Activated T-helper 2 cell treated with anti-CD3 and anti-CD28 coated beads, Interferon-gamma antibody, Interleukin-2, Interleukin-4, amounts not matched to agents 10 μg/mL and 5 μg/mL and 100 μg/mL, durations not matched to agents 14 hours and 24 hours and 36 hours (primary cell): ENCODE measurements at regions of chr12 and their contacts with region 1.

Region 1: DNA sequence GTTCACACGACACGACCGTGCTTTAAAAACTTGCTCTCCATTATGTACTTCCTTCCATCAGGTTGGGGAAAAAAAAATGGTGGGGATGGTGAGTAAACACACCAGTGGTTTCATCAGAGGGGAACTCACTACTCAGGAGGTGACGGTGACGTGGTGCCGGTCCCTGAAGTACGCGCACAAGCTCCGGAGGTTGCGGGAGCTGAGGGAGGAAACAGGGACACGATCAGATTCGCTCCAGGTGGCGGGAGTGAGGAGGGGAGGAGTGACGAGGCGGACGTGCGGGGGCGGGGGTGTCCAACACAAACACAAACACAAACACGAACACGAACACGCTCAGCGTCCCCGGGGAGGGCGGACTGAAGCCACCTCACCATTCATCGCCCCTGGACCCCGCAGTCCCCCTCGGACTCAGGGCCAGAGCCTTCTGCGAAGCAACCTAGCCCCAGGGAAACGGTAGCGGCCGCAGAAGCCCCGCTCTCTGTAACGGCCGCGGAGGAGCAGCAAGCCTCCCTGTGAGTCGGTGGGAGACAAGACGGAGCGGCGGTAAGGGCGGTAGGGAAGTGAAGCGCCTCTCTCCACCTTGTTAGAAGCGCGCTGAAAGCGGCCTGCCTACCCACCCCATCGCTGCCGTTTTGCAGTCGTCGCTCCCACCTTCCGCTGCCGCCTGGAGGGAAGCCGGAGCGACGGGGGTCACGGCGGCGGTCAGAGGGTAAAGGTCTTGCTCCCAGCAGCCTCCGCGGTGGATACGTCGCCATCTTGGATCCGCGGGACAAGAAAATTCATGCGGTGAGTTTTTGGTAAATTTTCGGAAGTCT is at the start of gene CNOT2:
- DNase-seq: peak; percentile 85
- H3K4me3 Mint-ChIP-seq: peak within 1 kb of the TSS; percentile 97
- H3K27ac Mint-ChIP-seq: peak within 1 kb of the TSS; percentile 99
- H3K4me1 Mint-ChIP-seq: peaks cover 45% of the 10 kb centered on the region
- H3K27me3 Mint-ChIP-seq: no peaks in the 10 kb centered on the region
- total RNA-seq, gene CNOT2: 67.1 and 69.1 TPM in 2 replicates

Region 2: GRCh38 chr12:69738351-69739286 is 504.3 kb before region 1 on chr12 and contains the start of gene RAB3IP:
- intact Hi-C with region 1: loop called (anchors 2 kb)
- DNase-seq: peak; percentile 87
- H3K4me3 Mint-ChIP-seq: peak within 1 kb of the TSS; percentile 81
- H3K27ac Mint-ChIP-seq: peak within 1 kb of the TSS; percentile 70
- H3K4me1 Mint-ChIP-seq: peaks cover 13% of the 10 kb centered on the region
- H3K27me3 Mint-ChIP-seq: peaks cover 33% of the 10 kb centered on the region
- total RNA-seq, gene RAB3IP: 29.8 and 37.7 TPM in 2 replicates

Region 3: DNA sequence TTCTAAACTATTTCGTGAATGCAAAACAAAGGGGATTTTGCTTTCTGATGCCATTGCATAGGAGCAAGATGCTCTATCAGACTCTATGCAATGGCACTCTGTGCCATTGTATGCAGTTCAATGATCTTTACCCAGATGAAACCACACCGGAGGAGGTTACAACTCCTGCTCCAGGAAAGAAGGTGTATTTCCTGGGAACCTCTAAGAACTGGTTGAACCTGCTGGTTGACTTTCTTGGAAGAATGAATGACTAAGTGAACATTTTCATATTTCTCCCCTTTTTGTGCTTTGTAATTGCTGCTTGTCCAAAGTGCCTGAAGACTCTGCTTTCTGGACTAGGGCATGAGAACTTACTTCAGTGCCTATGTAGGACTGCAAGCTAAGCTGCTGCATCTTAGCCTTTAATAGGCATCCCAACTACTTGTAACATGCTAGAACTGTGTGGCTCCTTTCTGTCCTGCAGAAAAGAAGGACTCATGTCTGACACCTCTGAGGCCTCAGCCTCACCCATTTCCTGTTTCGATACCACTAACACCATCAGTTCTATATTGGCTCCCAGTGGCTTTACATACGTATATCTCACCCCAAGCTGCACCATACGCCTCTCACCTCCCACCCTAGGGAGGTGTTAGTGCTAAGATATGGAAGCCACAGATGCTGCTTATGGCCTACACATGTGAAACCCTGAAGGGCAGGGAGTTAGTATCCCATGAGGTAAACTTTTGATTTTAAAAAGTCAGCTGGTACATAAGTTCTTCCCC is 193.1 kb before region 1 on chr12:
- intact Hi-C with region 1: loop called (anchors 5 kb)
- DNase-seq: no peak
- H3K4me3 Mint-ChIP-seq: no peak overlapping the region
- H3K27ac Mint-ChIP-seq: no peak overlapping the region
- H3K4me1 Mint-ChIP-seq: peaks cover 9% of the 10 kb centered on the region
- H3K27me3 Mint-ChIP-seq: peaks cover 2% of the 10 kb centered on the region

Region 4: DNA sequence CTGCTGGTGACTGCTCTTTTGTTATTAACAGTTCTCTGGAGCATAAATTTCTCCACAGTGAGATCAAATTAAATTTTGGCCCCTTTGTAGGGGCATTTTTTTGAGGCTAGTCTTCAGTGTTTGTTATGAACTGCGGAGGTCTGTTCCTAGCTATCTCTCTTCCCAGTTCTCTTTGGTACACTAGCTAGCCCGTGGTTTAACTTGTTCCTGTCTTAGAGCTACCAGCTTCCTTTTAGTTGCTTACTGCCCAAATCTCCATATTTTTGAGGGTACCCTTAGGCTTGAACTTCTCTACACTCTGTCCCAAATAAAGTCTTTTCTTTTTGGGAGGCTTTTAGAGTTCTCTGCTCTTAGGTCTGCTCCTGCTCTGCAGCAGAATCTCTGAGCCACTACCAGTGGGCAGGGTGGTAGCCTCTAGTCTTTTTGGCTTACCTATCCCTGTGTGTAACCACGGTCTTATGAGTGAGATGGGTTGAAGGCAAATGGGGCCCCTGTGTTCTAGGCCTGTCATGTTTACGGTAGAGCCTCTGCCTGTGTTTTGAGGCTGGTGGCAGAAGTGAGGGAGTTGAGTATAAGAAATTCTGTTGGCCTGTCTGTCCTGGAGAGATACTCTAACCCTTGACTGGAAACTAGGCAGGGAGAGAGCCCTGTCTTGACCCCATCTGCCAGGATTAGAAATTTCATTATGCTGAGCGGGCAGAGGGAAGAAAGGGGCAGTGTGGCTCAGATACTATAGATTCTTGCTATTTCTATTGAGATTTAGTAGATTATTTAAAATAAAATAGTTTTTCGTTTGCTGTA is 21.4 kb after region 1 on chr12:
- intact Hi-C with region 1: loop called (anchors 2 kb)
- DNase-seq: no peak
- H3K4me3 Mint-ChIP-seq: no peak overlapping the region
- H3K27ac Mint-ChIP-seq: no peak overlapping the region
- H3K4me1 Mint-ChIP-seq: peaks cover 32% of the 10 kb centered on the region
- H3K27me3 Mint-ChIP-seq: no peaks in the 10 kb centered on the region

Region 5: DNA sequence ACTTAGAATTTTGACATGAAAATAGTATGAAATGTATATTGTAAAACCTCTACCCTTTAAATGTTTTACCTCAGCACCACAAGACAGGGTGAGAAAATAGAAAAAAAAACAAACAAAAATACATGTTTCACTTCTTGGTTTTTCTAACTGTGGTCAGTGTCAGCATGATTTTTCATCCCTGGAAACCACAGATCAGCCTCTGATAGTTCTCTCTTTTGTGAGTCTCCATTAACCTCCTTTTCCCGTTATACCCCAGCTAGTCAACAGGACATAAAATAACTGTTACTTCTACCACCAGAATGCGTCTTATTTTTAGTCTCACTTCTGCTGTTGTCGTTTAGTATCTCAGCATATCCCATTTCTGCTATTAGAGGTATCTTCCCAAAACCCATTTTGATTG is 74.9 kb after region 1 on chr12:
- intact Hi-C with region 1: loop called (anchors 5 kb)
- DNase-seq: no peak
- H3K4me3 Mint-ChIP-seq: no peak overlapping the region
- H3K27ac Mint-ChIP-seq: no peak overlapping the region
- H3K4me1 Mint-ChIP-seq: peaks cover 21% of the 10 kb centered on the region
- H3K27me3 Mint-ChIP-seq: no peaks in the 10 kb centered on the region

Region 6: DNA sequence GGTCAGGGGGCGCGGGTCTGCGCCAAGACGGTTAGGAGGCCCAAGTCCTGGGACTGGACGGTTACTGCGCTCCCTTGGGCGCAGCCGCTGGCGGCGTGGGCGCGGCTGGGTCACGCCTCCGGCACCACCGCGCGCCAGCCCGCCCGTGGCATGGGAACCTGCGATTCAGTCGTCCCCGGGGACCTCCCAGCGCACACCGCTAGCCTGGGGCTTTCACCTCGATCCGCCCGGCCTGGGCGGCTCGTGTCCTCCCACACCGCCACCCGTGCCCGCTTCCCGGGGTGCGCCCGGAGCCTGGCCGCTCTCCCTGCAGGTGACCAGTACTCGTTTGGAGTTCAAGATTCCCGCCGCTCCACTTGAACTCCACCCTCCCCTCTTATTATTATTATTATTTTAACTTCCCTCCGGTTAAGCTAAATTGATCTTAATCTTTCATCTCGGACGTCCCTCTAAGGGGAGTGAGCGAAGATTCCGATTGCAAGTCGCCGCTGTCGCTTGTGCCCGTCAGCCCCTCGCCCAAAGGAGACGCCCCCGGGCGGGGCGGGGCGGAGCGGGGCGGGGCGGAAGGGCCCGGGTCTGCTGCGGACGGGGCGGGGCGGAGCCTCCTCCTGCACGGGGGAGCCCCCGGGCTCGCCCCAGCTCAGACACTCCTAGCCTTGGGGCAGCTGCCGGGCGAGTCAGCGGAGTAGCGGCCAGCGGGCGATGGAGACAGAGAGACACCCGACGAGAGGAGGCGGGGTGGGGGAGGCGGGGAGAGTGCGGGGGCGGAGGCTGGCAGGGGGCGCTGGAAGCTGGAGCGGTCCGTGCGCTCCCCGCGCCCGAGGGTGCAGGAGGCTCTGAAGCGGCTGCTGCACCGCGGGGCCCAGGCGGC is 123.0 kb after region 1 on chr12 and contains the start of gene KCNMB4:
- intact Hi-C with region 1: loop called (anchors 1 kb)
- DNase-seq: peak; percentile 68
- H3K4me3 Mint-ChIP-seq: peak within 1 kb of the TSS; percentile 87
- H3K27ac Mint-ChIP-seq: no peak within 1 kb of the TSS
- H3K4me1 Mint-ChIP-seq: peaks cover 21% of the 10 kb centered on the region
- H3K27me3 Mint-ChIP-seq: peaks cover 33% of the 10 kb centered on the region
- total RNA-seq, gene KCNMB4: 0.37 and 0.55 TPM in 2 replicates